K562 (cell line): ENCODE measurements at regions of chr5 and their contacts with region 1.

Region 1: GRCh38 chr5:138035605-138036537 is 3.0 kb upstream of the FAM13B start:
- DNase-seq: peak; percentile 67 to 91 (median 72)
- ATAC-seq: peak; percentile 80
- H3K4me3 ChIP-seq: no peak overlapping the region
- H3K27ac ChIP-seq: no peak overlapping the region
- H3K4me1 ChIP-seq: peaks cover 10 to 13% of the 10 kb centered on the region in 2 experiments; a peak in 4 of 5 replicates
- H3K27me3 ChIP-seq: no peaks in the 10 kb centered on the region
- CTCF ChIP-seq: peak; percentile 96 to 100 (median 99)
- EP300 ChIP-seq: peak; percentile 45; the same call in 1 of the 2 replicates
- POLR2A ChIP-seq: no peak
- RAD21 ChIP-seq: peak; percentile 71 to 84

Region 2: DNA sequence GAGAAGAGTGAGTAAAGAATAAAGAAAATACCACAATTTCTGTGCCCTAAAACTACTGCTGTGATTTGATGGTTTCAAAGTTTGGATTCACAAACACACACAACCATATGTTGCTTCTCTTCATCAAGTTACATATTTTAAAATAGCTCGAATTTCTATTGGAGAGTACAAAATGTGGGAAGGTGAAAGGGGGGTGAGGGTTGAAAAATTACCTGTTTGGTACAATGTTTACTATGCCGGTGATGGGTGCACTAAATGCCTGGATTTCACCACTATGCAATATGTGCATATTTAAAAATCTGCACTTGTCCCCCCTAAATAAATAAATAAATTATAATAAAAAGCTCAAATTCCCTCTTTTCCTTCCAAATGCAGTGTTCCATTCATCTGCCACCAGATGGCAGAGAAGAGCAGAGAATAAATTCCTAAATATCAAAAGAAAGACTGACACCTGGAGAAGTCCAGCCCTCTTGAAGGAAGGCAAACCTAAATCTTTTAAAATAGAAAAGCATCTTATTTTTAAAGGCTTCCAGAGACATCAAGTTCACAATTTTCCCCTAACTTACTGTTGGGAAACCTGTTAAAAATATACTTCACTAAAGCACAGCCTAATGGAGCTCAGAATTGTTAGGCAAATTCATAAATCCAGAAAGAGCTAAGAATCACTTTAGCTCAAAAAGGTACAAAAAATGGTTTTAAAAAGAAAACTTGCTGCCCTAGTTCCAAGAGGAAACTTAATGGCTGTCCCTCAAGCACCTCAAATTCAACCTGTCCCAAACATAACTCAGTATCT is 256.9 kb before region 1 on chr5:
- CTCF ChIA-PET with region 1: no interaction called
- POLR2A ChIA-PET with region 1: no interaction called
- in situ Hi-C with region 1: no loop called
- intact Hi-C with region 1: loop called (anchors 2 kb)
- DNase-seq: peak; percentile 20 to 65 (median 28)
- ATAC-seq: peak; percentile 56; the same call in 1 of the 3 replicates
- H3K4me3 ChIP-seq: no peak overlapping the region
- H3K27ac ChIP-seq: no peak overlapping the region
- H3K4me1 ChIP-seq: no peaks in the 10 kb centered on the region
- H3K27me3 ChIP-seq: peaks cover 3 to 12% of the 10 kb centered on the region in 2 experiments; a peak in 2 of 5 replicates
- CTCF ChIP-seq: peak; percentile 59 to 83 (median 61); a peak in 5 of 6 replicates
- EP300 ChIP-seq: no peak
- POLR2A ChIP-seq: no peak
- RAD21 ChIP-seq: peak; percentile 71

Region 3: DNA sequence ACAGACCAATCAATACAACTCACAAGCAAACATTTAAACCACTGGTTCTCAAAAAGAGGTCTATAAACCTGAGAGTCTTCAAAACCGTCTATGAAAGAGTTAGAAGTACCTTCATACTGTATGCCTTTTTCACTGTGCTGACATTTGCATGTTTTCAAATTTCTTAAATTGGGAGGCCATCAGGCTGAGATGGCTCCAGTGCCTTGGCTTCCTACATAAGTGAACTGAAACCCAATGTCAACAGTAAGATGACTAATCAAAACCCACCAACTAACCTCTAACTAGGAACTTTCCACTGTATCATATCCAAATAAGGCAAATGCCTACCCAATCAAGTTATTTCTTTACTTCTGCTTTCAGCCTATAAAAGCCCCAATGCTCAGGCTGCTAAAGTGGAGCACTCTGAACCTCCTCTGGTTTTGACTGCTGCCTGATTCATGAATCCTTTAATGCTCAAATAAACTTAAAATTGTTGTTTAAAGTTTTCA is 38.1 kb before region 1 on chr5:
- CTCF ChIA-PET with region 1: no interaction called
- POLR2A ChIA-PET with region 1: no interaction called
- in situ Hi-C with region 1: no loop called
- intact Hi-C with region 1: loop called (anchors 2 kb)
- DNase-seq: peak in 2 of 4 experiments; percentile 31 to 59
- ATAC-seq: peak; percentile 35
- H3K4me3 ChIP-seq: peak overlapping the region; percentile 8; the same call in 1 of the 2 replicates
- H3K27ac ChIP-seq: peak overlapping the region; percentile 89
- H3K4me1 ChIP-seq: peaks cover 8 to 46% of the 10 kb centered on the region in 2 experiments; a peak in 4 of 5 replicates
- H3K27me3 ChIP-seq: no peaks in the 10 kb centered on the region
- CTCF ChIP-seq: no peak
- EP300 ChIP-seq: peak; percentile 56
- POLR2A ChIP-seq: peak; percentile 47; the same call in 1 of the 2 replicates
- RAD21 ChIP-seq: no peak

Region 4: GRCh38 chr5:138128334-138128733 is 92.5 kb after region 1 on chr5:
- CTCF ChIA-PET with region 1: interaction called, 17 read pairs
- POLR2A ChIA-PET with region 1: no interaction called
- in situ Hi-C with region 1: no loop called
- intact Hi-C with region 1: loop called (anchors 1 kb)
- DNase-seq: no peak
- ATAC-seq: no peak
- H3K4me3 ChIP-seq: no peak overlapping the region
- H3K27ac ChIP-seq: no peak overlapping the region
- H3K4me1 ChIP-seq: no peaks in the 10 kb centered on the region
- H3K27me3 ChIP-seq: peaks cover 7 to 8% of the 10 kb centered on the region in 2 experiments; a peak in 2 of 5 replicates
- CTCF ChIP-seq: no peak
- EP300 ChIP-seq: no peak
- POLR2A ChIP-seq: no peak
- RAD21 ChIP-seq: no peak